Naive thymus-derived CD4-positive, alpha-beta T cell (primary cell): ENCODE measurements at regions of chr19 and their contacts with region 1.

Region 1: DNA sequence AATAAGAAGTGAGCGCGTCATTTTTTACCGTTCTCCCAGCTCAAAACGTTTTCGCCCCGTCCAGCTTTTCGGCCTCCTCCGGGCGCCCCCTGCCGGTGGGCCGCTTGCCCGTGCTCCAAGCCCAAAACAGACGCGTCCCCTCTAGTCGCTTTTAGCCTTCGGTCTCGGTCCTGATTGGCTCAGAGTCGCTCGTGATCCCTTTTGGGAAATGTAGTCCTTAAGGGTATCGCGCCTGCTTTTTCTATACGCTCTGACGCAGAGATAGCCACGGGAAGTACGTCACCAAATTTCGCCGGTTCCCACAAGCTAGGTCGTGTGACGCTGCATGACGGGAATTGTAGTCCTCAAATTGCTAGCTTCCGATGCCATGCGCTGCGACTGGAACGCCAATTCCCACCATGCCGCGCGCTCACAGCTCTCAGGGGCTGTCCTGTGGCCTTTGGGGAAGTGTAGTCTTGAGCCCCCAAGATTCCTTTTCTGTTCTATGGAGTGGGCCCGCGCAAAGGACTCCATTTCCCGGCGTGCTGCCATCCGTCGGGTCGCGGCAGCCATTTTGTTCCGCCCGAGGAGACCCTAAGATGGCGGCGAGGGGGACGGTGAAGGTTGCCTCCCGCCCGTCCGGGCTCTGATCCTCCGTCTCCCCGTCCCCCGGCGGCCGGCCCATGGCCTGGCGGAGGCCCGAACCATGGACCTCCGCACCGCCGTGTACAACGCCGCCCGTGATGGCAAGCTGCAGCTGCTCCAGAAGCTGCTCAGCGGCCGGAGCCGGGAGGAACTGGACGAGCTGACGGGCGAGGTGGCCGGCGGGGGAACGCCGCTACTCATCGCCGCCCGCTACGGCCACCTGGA is at the start of gene FEM1A:
- DNase-seq: peak; percentile 93 to 100 (median 99)
- ATAC-seq: peak; percentile 96
- H3K4me3 ChIP-seq: peak within 1 kb of the TSS; percentile 72
- H3K4me3 Mint-ChIP-seq: peak within 1 kb of the TSS; percentile 75 to 90 (median 87)
- H3K27ac ChIP-seq: peak within 1 kb of the TSS; percentile 92
- H3K27ac Mint-ChIP-seq: peak within 1 kb of the TSS; percentile 46 to 94 (median 85)
- H3K4me1 ChIP-seq: peaks cover 0 to 7% of the 10 kb centered on the region in 2 donors
- H3K4me1 Mint-ChIP-seq: peaks cover 7 to 46% (median 29%) of the 10 kb centered on the region in 7 donors
- H3K27me3 ChIP-seq: no peaks in the 10 kb centered on the region
- H3K27me3 Mint-ChIP-seq: no peaks in the 10 kb centered on the region
- total RNA-seq, gene FEM1A: 10.2 to 17.2 (median 14.4) TPM

Region 2: DNA sequence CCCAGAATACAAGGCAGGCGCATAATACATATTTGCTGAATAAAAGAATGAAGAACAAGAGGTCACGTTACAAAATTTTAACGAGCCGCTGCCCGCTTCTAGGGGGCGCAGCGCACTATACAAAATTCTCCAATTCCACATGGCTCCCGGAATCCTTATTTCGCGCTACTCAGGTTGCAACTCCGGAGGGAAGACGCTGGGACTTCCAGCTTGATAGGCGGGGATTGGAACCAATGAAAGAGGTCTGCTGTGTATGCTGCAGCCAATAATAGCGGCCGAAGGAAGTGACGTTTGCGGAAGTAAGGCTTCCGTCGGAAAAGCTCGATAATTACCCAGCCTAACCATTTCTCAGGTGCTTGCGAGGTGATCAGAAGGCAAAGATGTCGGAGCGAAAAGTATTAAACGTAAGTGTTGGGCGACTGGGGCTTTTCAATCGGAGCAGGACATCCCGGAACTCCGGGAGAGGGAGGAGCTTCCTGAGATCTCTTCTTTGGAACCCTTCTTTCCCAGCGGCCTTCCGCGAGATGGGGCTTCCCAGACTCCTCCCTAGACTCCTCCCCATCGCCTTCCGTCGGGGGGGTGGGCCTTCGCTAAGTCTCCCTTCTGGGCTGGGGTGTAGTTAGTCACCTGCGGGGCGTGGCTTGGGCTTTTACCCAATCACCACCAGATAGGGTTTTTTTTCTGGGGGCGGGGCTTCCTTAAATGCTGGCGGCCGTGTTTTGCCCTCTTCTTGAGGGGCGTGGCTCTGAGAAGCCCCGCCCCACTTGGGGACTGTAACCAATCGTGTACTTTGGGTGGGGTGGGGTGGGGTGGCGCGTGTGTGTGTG is 544.4 kb before region 1 on chr19 and contains the start of gene YJU2:
- CTCF ChIA-PET with region 1: no interaction called
- POLR2A ChIA-PET with region 1: no interaction called
- intact Hi-C with region 1: loop called in 1 of 2 experiments (anchors 1 kb)
- DNase-seq: peak; percentile 92 to 100 (median 99)
- ATAC-seq: peak; percentile 96
- H3K4me3 ChIP-seq: peak within 1 kb of the TSS; percentile 100
- H3K4me3 Mint-ChIP-seq: peak within 1 kb of the TSS; percentile 85 to 98 (median 96)
- H3K27ac ChIP-seq: peak within 1 kb of the TSS; percentile 99
- H3K27ac Mint-ChIP-seq: peak within 1 kb of the TSS; percentile 97 to 100 (median 99)
- H3K4me1 ChIP-seq: peaks cover 12 to 13% of the 10 kb centered on the region in 2 donors
- H3K4me1 Mint-ChIP-seq: peaks cover 10 to 33% (median 24%) of the 10 kb centered on the region in 7 donors
- H3K27me3 ChIP-seq: no peaks in the 10 kb centered on the region
- H3K27me3 Mint-ChIP-seq: peaks cover 0 to 2% (median 0%) of the 10 kb centered on the region in 5 donors
- total RNA-seq, gene YJU2: 28.5 to 42.1 (median 31.9) TPM

Region 3: DNA sequence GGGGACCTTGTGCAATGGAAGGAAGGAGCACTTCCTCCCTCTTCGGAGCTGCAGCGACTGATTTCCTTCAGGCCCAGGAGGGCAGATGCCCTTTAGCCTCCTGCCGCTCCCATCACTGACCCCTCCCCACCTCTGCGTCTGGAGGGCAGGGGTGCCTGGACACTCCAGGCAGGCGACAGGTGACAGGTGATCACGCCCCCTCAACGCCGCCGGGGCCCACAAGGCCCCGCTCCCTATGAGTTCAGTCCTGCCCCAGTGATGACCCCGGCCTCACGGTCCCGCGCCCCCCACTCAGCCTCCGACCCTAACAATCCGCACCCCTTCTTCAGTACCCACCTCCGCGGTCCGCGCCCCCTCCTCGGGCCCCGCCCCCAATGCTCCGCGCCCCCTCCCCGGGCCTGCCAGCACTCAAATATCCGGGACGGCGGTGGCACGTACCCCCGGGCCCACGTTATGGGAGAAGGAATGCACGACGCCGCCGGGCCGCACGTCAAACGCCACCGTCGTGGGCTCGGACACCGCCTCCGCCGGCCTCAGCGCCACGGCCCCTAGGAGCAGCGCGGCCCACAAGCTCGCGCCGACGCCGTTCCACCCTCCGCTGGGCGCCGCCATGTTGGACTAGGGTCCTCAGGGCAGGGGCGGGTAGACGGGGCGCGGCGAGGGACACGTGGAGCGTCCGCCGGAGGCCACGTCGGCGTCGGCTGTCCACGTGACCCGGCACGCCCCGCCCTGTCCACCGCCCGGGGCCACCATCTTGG is 121.5 kb before region 1 on chr19 and contains the start of gene MYDGF:
- CTCF ChIA-PET with region 1: no interaction called
- POLR2A ChIA-PET with region 1: no interaction called
- intact Hi-C with region 1: loop called (anchors 1 kb)
- DNase-seq: peak; percentile 86 to 95 (median 92)
- ATAC-seq: peak; percentile 100
- H3K4me3 ChIP-seq: peak within 1 kb of the TSS; percentile 65
- H3K4me3 Mint-ChIP-seq: peak within 1 kb of the TSS; percentile 77 to 92 (median 86)
- H3K27ac ChIP-seq: peak within 1 kb of the TSS; percentile 81
- H3K27ac Mint-ChIP-seq: peak within 1 kb of the TSS; percentile 28 to 95 (median 84)
- H3K4me1 ChIP-seq: peaks cover 10 to 13% of the 10 kb centered on the region in 2 donors
- H3K4me1 Mint-ChIP-seq: peaks cover 0 to 20% (median 16%) of the 10 kb centered on the region in 7 donors
- H3K27me3 ChIP-seq: no peaks in the 10 kb centered on the region
- H3K27me3 Mint-ChIP-seq: no peaks in the 10 kb centered on the region
- total RNA-seq, gene MYDGF: 28.1 to 81.0 (median 32.1) TPM

Region 4: DNA sequence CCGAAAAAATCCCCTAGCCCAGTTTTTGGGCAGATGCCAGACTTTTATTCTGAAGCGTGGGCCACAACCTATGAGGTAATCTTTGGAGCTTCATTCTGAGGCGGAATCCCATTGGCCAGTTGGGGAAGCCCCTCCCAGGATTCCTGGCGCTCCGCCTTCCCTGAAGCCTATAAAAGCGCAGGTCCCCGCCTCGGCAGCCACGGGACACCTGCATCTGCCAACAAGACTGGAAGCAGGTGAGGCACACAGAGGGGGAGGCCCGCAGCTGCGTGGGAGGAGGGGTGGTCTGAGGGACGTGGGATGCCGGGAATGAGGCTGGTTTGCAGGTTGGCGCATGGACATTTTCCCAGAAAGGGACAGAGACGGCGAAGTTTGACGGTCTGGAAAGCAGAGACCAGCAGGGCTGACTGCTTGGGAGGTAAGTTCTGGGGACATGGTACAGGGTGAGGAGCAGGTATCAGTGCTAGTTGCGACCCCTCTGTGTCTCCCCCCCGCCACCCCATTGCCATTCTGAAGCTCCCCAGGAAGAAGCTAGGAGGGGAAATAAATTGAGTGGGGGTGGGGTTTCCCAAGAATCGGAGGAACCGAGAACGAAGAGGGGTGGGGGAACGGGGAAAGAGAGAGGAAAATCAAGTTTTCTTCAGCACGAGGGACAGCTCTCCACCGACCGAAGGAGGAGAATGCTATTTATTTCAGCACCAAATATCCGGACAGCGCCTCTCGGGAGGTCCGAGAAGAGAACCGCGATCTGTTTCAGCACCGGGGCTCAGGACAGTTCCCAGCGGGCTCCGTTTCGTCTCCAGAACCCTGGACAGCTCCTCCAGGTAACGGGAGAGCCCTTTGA is 22.2 kb before region 1 on chr19:
- CTCF ChIA-PET with region 1: interaction called, 4 read pairs
- POLR2A ChIA-PET with region 1: interaction called, 4 read pairs
- intact Hi-C with region 1: loop called in 1 of 2 experiments (anchors 1 kb)
- DNase-seq: peak; percentile 66 to 88 (median 84)
- ATAC-seq: peak; percentile 99
- H3K4me3 ChIP-seq: no peak overlapping the region
- H3K4me3 Mint-ChIP-seq: peak overlapping the region in 1 of 10 donors; percentile 65
- H3K27ac ChIP-seq: no peak overlapping the region
- H3K27ac Mint-ChIP-seq: peak overlapping the region in 4 of 9 donors; percentile 28 to 81 (median 64)
- H3K4me1 ChIP-seq: no peaks in the 10 kb centered on the region
- H3K4me1 Mint-ChIP-seq: peaks cover 0 to 4% (median 3%) of the 10 kb centered on the region in 7 donors
- H3K27me3 ChIP-seq: no peaks in the 10 kb centered on the region
- H3K27me3 Mint-ChIP-seq: peaks cover 3 to 35% (median 18%) of the 10 kb centered on the region in 5 donors

Region 5: GRCh38 chr19:4831304-4831978 is 40.0 kb after region 1 on chr19 and contains the start of gene TICAM1:
- CTCF ChIA-PET with region 1: interaction called, 5 read pairs
- POLR2A ChIA-PET with region 1: interaction called, 3 read pairs
- intact Hi-C with region 1: loop called in 1 of 2 experiments (anchors 1 kb)
- DNase-seq: peak; percentile 66 to 89 (median 70)
- ATAC-seq: peak; percentile 97
- H3K4me3 ChIP-seq: peak within 1 kb of the TSS; percentile 77
- H3K4me3 Mint-ChIP-seq: peak within 1 kb of the TSS; percentile 72 to 99 (median 90)
- H3K27ac ChIP-seq: peak within 1 kb of the TSS; percentile 95
- H3K27ac Mint-ChIP-seq: peak within 1 kb of the TSS; percentile 72 to 96 (median 91)
- H3K4me1 ChIP-seq: peaks cover 4 to 16% of the 10 kb centered on the region in 2 donors
- H3K4me1 Mint-ChIP-seq: peaks cover 20 to 35% (median 26%) of the 10 kb centered on the region in 7 donors
- H3K27me3 ChIP-seq: no peaks in the 10 kb centered on the region
- H3K27me3 Mint-ChIP-seq: no peaks in the 10 kb centered on the region
- total RNA-seq, gene TICAM1: 12.5 to 28.4 (median 16.5) TPM

Region 6: GRCh38 chr19:5680437-5681368 is 889.3 kb after region 1 on chr19 and contains the starts of genes HSD11B1L and MICOS13:
- CTCF ChIA-PET with region 1: no interaction called
- POLR2A ChIA-PET with region 1: no interaction called
- intact Hi-C with region 1: loop called in 1 of 2 experiments (anchors 1 kb)
- DNase-seq: peak; percentile 98 to 99 (median 99)
- ATAC-seq: peak; percentile 96
- H3K4me3 ChIP-seq: peak within 1 kb of the TSS; percentile 100
- H3K4me3 Mint-ChIP-seq: peak within 1 kb of the TSS; percentile 85 to 97 (median 94)
- H3K27ac ChIP-seq: peak within 1 kb of the TSS; percentile 98
- H3K27ac Mint-ChIP-seq: peak within 1 kb of the TSS; percentile 94 to 100 (median 97)
- H3K4me1 ChIP-seq: peaks cover 8 to 18% of the 10 kb centered on the region in 2 donors
- H3K4me1 Mint-ChIP-seq: peaks cover 20 to 33% (median 25%) of the 10 kb centered on the region in 7 donors
- H3K27me3 ChIP-seq: no peaks in the 10 kb centered on the region
- H3K27me3 Mint-ChIP-seq: peaks cover 0 to 18% (median 0%) of the 10 kb centered on the region in 5 donors
- total RNA-seq, gene HSD11B1L: 2.8 to 5.2 (median 3.6) TPM
- total RNA-seq, gene MICOS13: 26.1 to 49.3 (median 38.4) TPM

Region 7: DNA sequence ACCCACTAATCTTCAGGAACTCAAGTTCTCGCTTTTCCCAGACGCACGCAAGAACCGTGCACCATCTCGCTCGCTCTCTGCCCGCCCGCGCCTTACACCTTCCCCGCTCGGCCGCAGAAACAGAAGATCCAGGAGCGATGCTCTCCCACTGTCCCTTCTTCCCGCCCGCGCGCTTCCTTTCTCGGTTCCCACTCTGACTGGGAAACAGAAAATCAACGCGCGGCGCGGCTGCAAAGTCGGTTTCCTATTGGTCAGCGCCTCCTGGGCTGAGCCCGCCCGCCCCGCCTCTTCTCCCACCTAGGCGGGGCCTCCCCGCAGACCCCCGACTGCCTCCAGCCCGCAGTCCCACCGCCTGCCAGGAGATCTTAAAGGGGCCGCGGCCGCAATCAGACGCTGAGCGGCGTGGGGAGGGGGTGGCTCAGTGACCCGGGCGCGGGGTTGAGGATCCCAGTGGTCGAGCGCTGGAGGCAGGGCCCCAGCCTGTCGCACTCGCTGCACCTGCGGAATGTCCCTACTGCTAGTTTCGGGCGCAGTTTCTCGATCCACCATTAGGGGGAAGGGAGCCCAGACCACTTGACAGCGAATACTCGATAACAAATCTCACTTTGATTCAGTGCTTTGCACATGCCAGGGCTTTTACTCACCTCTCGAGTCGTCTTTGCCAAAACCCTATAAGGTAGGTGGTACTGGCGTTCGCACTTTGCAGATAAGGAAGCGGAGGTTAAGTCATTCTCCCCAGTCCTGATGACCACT is 1668.9 kb after region 1 on chr19:
- CTCF ChIA-PET with region 1: no interaction called
- POLR2A ChIA-PET with region 1: no interaction called
- intact Hi-C with region 1: loop called in 1 of 2 experiments (anchors 5 kb)
- DNase-seq: peak; percentile 87 to 97 (median 96)
- ATAC-seq: peak; percentile 90
- H3K4me3 ChIP-seq: peak overlapping the region; percentile 72
- H3K4me3 Mint-ChIP-seq: peak overlapping the region; percentile 92 to 99 (median 98)
- H3K27ac ChIP-seq: peak overlapping the region; percentile 83
- H3K27ac Mint-ChIP-seq: peak overlapping the region; percentile 83 to 96 (median 91)
- H3K4me1 ChIP-seq: peaks cover 0 to 4% of the 10 kb centered on the region in 2 donors
- H3K4me1 Mint-ChIP-seq: peaks cover 11 to 40% (median 34%) of the 10 kb centered on the region in 7 donors
- H3K27me3 ChIP-seq: no peaks in the 10 kb centered on the region
- H3K27me3 Mint-ChIP-seq: peaks cover 0 to 8% (median 0%) of the 10 kb centered on the region in 5 donors